ENCODE measurements at regions of chr15 and their contacts with region 1.

Region 1: GRCh38 chr15:74172701-74173379 is 670 bp upstream of the ISLR start:
- DNase-seq: peak; percentile 86 to 91 (median 87)
- H3K4me3 ChIP-seq: peak overlapping the region; percentile 46
- H3K27ac ChIP-seq: peak overlapping the region; percentile 84 to 89
- H3K4me1 ChIP-seq: peaks cover 56% of the 10 kb centered on the region
- H3K27me3 ChIP-seq: no peaks in the 10 kb centered on the region
- CTCF ChIP-seq: no peak
- EP300 ChIP-seq: no peak
- POLR2A ChIP-seq: no peak

Region 2: DNA sequence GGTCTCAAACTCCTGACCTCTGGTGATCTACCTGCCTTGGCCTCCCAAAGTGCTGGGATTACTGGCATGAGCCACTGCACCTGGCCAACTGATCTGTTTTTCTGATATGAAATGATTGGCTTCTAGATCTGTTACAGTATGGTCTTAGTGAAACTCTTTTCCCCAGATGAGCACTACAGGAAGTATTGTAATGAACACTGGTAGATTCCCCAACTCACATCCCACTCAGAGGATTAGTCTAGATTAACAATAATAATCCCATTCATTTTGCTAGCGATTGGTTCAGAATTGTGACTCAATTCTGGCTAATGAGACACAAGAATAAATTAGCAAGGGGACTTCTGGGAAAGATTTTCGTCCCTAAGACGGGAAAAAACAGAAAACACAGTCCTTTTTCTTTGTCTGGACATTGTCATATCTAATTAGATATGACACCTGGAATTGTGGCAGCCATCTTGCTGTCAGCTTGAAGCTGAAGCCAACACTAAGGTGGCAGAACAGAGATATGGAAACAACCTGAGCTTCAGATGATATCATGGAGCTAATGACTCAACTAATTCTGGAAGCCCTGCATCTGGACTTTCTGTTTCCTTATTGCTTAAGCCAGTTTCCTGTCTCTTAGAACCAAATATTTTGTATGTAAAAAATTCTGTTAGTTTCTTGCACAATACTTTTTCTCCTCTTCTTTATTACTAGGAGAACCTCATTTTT is 522.3 kb before region 1 on chr15:
- intact Hi-C with region 1: no loop called
- DNase-seq: no peak
- H3K4me3 ChIP-seq: no peak overlapping the region
- H3K27ac ChIP-seq: no peak overlapping the region
- H3K4me1 ChIP-seq: no peaks in the 10 kb centered on the region
- H3K27me3 ChIP-seq: no peaks in the 10 kb centered on the region
- CTCF ChIP-seq: no peak
- EP300 ChIP-seq: no peak
- POLR2A ChIP-seq: no peak

Region 3: GRCh38 chr15:74134387-74135027 is 38.3 kb before region 1 on chr15:
- intact Hi-C with region 1: loop called in 2 of 4 experiments (anchors 5 kb)
- DNase-seq: peak in 2 of 5 donors; percentile 23 to 36
- H3K4me3 ChIP-seq: no peak overlapping the region
- H3K27ac ChIP-seq: no peak overlapping the region
- H3K4me1 ChIP-seq: peaks cover 9% of the 10 kb centered on the region
- H3K27me3 ChIP-seq: peaks cover 4% of the 10 kb centered on the region
- CTCF ChIP-seq: no peak
- EP300 ChIP-seq: no peak
- POLR2A ChIP-seq: no peak

Region 4: DNA sequence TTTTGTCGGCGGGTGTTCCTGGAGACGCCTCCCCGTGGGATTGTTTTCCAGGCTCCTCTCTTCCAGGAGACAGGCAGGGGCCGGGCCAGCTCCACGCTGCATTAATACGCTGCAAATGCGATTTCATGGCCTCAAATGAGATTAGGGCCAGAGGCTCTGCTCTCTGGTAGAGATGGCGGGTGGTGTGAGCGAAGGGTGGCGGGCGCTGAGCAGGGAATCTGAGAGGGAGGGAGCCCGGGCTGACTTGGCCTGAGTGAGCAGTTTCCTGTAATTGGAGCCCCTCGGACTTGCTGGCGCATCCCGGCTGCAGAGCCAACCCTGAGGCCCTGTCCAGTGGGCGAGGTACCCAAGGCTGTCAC is 55.9 kb after region 1 on chr15:
- intact Hi-C with region 1: loop called in 1 of 4 experiments (anchors 10 kb)
- DNase-seq: no peak
- H3K4me3 ChIP-seq: no peak overlapping the region
- H3K27ac ChIP-seq: no peak overlapping the region
- H3K4me1 ChIP-seq: peaks cover 6% of the 10 kb centered on the region
- H3K27me3 ChIP-seq: no peaks in the 10 kb centered on the region
- CTCF ChIP-seq: no peak
- EP300 ChIP-seq: no peak
- POLR2A ChIP-seq: no peak